ENCODE measurements at regions of chr6 and their contacts with region 1.

Region 1: DNA sequence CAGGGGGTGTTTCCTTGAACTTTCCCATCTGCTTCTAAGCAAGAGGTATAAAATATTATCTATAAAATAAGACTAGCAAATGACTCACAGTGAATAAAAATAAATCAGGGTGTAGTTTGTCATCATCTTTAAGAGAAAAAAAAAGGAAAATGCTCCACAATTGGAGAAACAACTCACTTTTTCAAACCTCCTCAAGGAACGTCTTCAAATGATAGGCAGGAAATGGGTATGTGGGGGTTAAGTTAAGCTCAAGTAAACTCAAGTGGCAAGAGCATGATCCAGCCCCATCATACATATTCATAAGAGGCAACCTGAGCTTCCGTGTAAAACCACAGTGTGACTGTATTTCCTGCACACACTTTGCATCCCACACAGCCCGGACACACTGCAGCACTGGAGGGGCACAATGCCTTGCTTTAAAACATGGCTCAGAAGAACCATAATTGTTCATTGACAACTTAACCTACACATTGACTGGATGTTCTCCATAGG is 58.5 kb upstream of the CEP85L start:
- DNase-seq: peak; percentile 89
- ATAC-seq: peak; percentile 86
- H3K4me3 Mint-ChIP-seq: peak overlapping the region; percentile 98
- H3K27ac Mint-ChIP-seq: peak overlapping the region; percentile 94
- H3K4me1 Mint-ChIP-seq: peaks cover 63% of the 10 kb centered on the region
- H3K27me3 Mint-ChIP-seq: no peaks in the 10 kb centered on the region

Region 2: GRCh38 chr6:118509009-118509617 is 200.8 kb before region 1 on chr6:
- CTCF ChIA-PET with region 1: no interaction called
- POLR2A ChIA-PET with region 1: no interaction called
- DNase-seq: no peak
- ATAC-seq: no peak
- H3K4me3 Mint-ChIP-seq: no peak overlapping the region
- H3K27ac Mint-ChIP-seq: no peak overlapping the region
- H3K4me1 Mint-ChIP-seq: no peaks in the 10 kb centered on the region
- H3K27me3 Mint-ChIP-seq: no peaks in the 10 kb centered on the region

Region 3: DNA sequence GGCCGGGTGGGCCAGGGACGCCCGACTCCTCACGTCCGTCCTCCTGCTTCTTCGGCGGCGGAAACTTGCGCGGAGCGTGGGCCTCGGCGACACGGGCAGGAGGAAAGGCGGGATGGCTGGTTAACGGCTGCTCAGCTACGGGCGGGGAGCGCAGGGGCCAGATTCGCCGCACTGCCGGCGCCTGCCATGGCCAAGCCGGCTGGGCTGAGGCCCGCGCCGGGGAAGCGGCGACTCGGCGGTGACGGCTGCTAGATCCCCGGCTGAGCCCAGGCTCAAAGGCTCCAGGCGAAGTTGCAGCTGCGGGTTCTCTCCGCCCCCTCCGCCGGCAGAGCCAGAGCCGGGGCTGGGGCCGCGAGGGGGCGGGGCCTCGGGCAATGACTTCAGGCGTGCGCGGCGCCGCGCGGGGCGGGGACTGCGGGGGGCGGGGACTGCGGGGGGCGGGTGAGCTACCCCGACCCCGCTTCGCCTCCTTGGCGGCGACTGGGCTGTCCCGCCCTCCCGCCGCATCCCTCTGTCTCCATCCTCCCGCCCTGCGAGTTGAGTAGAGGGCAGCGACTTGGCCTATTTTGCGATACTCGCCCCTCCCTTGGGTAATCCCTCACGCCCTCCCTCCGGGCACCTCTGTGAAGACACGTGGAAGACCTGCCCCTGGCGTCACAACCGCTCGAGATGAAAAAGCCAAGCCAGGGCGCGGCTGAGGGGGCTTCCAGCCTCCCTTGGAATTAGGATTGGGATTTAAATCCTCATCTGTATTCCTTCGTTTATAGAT is 58.4 kb before region 1 on chr6 and contains the start of gene CEP85L:
- CTCF ChIA-PET with region 1: interaction called, 7 read pairs
- POLR2A ChIA-PET with region 1: interaction called, 35 read pairs
- DNase-seq: peak; percentile 91
- ATAC-seq: peak; percentile 92
- H3K4me3 Mint-ChIP-seq: peak within 1 kb of the TSS; percentile 85
- H3K27ac Mint-ChIP-seq: peak within 1 kb of the TSS; percentile 90
- H3K4me1 Mint-ChIP-seq: peaks cover 43% of the 10 kb centered on the region
- H3K27me3 Mint-ChIP-seq: no peaks in the 10 kb centered on the region
- total RNA-seq, gene CEP85L: 45.7 to 48.7 TPM

Region 4: DNA sequence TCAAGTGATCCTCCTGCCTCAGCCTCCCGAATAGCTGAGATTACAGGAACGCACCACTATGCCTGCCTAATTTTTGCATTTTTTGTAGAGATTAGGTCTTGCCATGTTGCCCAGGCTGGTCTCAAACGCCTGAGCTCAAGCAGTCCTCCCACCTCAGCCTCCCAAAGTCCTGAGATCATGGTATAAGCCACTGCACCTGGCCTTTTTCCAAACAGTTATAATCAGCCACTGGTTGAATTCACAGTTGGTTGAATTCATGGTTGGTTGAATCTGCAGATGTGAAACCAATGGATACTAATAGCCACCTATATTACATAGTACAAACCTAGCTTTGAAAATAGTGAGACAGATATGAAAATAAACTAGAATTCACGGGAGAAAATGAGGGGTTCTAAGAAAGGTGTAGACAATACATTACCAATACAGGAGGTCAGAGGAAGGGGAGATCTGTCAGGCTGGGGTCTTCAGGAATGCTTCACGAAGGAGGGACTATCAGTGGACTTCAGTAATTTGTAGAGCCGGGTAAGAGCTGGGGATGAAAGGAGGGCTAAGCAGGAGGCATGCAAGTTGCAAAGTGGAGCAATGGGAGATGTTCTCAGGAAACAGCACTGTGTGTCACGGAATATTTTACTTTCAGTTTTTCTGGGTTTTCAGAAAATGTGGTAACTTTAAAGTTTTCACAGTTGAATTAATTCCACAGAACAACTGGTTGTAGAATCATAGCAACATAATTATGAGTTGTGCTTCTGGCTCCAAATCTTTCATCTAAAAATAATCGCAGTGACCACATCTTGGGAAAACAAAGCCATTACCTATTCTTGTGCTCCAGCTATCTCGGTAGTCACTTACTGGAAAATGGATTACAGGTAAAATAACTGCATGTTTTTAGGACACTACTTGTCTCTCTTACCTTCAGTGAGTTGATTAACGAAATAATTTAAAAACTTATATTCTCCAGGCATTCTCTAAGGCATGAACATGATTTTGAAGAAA is 45.6 kb before region 1 on chr6:
- CTCF ChIA-PET with region 1: interaction called, 5 read pairs
- POLR2A ChIA-PET with region 1: interaction called, 14 read pairs
- DNase-seq: no peak
- ATAC-seq: peak; percentile 66
- H3K4me3 Mint-ChIP-seq: peak overlapping the region; percentile 82
- H3K27ac Mint-ChIP-seq: peak overlapping the region; percentile 93
- H3K4me1 Mint-ChIP-seq: peaks cover 44% of the 10 kb centered on the region
- H3K27me3 Mint-ChIP-seq: no peaks in the 10 kb centered on the region

Region 5: DNA sequence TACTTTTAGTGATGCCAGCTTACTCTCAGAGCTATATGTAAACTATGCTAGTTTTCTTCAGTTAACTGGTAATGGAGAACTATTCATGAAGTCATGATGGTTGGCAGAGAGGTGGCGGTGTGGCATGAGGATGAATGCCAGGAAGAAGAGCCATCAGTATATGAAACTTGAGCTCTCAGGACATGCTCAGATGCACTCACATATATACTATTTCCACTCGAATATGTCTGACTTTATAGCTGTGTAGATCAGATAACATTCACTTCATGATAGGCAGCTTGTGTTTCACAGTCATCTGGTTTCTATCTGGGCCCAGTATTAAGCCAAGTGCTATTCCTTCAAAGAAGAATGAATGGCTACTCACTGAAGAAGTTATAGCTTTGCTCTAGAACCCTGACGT is 12.4 kb before region 1 on chr6:
- CTCF ChIA-PET with region 1: interaction called, 16 read pairs
- POLR2A ChIA-PET with region 1: interaction called, 17 read pairs
- DNase-seq: no peak
- ATAC-seq: no peak
- H3K4me3 Mint-ChIP-seq: no peak overlapping the region
- H3K27ac Mint-ChIP-seq: no peak overlapping the region
- H3K4me1 Mint-ChIP-seq: peaks cover 41% of the 10 kb centered on the region
- H3K27me3 Mint-ChIP-seq: no peaks in the 10 kb centered on the region

Region 6: DNA sequence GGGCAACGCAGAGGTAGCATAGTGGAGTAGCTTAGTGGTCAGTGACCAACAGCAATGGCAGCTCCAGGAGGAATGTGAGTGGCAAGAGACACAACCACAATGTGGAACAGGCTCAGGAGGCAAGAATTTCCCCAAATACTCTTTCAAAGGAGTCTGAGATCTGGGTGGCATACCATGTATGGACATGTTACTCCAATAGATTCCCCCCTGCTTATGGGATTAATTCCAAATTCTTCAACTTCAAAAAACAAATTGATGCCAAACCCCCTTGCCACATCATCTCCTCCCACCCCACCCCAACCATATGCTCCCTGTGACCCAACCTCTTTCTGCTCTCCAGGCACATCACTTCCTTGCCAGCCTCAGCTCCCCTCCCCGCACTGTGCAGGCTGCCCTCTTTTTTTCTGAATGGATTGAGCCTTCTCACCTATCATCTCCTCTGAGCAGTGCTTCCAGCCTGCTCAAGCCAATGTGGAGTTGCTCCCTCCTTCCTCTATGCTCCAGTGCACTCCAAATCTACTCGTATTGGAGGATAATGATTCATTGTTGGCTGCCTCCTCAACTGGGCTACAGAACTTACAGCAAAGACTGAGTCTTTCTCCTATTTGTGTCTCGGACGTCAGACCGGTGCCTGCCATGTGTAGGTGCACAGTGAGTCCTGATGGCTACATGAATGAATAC is 34.5 kb after region 1 on chr6:
- CTCF ChIA-PET with region 1: no interaction called
- POLR2A ChIA-PET with region 1: no interaction called
- DNase-seq: no peak
- ATAC-seq: no peak
- H3K4me3 Mint-ChIP-seq: no peak overlapping the region
- H3K27ac Mint-ChIP-seq: no peak overlapping the region
- H3K4me1 Mint-ChIP-seq: peaks cover 25% of the 10 kb centered on the region
- H3K27me3 Mint-ChIP-seq: no peaks in the 10 kb centered on the region

Region 7: DNA sequence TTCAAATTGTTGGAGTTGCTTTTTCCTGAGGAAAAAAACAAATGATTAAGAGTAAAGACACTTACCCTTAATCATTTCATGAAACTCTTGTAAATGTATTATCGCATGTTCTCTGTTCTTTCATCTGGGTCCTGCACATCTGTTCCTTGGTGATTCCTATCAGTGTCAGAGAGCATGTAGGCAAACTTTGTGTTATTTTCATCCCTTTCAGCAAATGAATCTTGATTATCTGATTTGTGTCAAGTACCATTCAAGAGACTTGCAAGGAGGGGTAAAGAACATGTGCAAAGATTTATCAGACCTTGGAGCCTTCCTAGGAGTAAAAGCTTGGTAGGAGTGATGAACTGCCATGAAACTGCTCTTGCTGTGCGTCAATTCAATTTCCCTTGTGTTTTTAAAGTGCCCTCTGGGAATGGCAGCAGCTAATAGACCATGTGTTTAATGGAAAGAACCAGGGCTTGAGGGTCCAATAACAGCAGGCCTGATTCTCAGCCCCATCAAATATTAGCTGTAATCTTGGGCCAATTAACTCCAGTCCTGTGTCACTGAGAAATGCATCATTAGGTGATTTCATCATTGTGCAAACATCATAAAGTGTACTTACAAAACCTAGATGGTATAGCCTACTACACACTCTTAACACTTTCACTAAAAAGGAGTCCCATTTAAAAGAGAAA is 60.3 kb after region 1 on chr6:
- CTCF ChIA-PET with region 1: interaction called, 5 read pairs
- POLR2A ChIA-PET with region 1: interaction called, 16 read pairs
- DNase-seq: no peak
- ATAC-seq: no peak
- H3K4me3 Mint-ChIP-seq: no peak overlapping the region
- H3K27ac Mint-ChIP-seq: no peak overlapping the region
- H3K4me1 Mint-ChIP-seq: peaks cover 15% of the 10 kb centered on the region
- H3K27me3 Mint-ChIP-seq: no peaks in the 10 kb centered on the region

Region 8: GRCh38 chr6:118800394-118801071 is 90.6 kb after region 1 on chr6:
- CTCF ChIA-PET with region 1: interaction called, 7 read pairs
- POLR2A ChIA-PET with region 1: interaction called, 16 read pairs
- DNase-seq: peak; percentile 92
- ATAC-seq: peak; percentile 95
- H3K4me3 Mint-ChIP-seq: peak overlapping the region; percentile 45
- H3K27ac Mint-ChIP-seq: peak overlapping the region; percentile 81
- H3K4me1 Mint-ChIP-seq: peaks cover 40% of the 10 kb centered on the region
- H3K27me3 Mint-ChIP-seq: no peaks in the 10 kb centered on the region

Measured in activated CD8-positive, alpha-beta T cell treated with anti-CD3 and anti-CD28 coated beads, Interleukin-2, amount 10 ng/mL, durations not matched to agents 7 days and 5 days (primary cell).